WTC11 (cell line): ENCODE measurements at regions of chr9 and their contacts with region 1.

Region 1: GRCh38 chr9:133184962-133185361 is 21.2 kb upstream of the GBGT1 start:
- DNase-seq: no peak
- ATAC-seq: no peak
- H3K4me3 Mint-ChIP-seq: no peak overlapping the region
- H3K27ac Mint-ChIP-seq: no peak overlapping the region
- H3K4me1 Mint-ChIP-seq: no peaks in the 10 kb centered on the region
- H3K27me3 Mint-ChIP-seq: peaks cover 38% of the 10 kb centered on the region
- CTCF ChIP-seq: no peak

Region 2: GRCh38 chr9:133014696-133015095 is 170.3 kb before region 1 on chr9:
- CTCF ChIA-PET with region 1: no interaction called
- POLR2A ChIA-PET with region 1: no interaction called
- DNase-seq: no peak
- ATAC-seq: no peak
- H3K4me3 Mint-ChIP-seq: no peak overlapping the region
- H3K27ac Mint-ChIP-seq: no peak overlapping the region
- H3K4me1 Mint-ChIP-seq: no peaks in the 10 kb centered on the region
- H3K27me3 Mint-ChIP-seq: peaks cover 57% of the 10 kb centered on the region
- CTCF ChIP-seq: no peak

Region 3: GRCh38 chr9:133030317-133031129 is 154.4 kb before region 1 on chr9 and contains the start of gene GTF3C5:
- CTCF ChIA-PET with region 1: interaction called, 11 read pairs
- POLR2A ChIA-PET with region 1: interaction called, 4 read pairs
- DNase-seq: peak; percentile 90
- ATAC-seq: peak; percentile 98
- H3K4me3 Mint-ChIP-seq: peak within 1 kb of the TSS; percentile 99
- H3K27ac Mint-ChIP-seq: peak within 1 kb of the TSS; percentile 99
- H3K4me1 Mint-ChIP-seq: peaks cover 17% of the 10 kb centered on the region
- H3K27me3 Mint-ChIP-seq: peaks cover 12% of the 10 kb centered on the region
- CTCF ChIP-seq: no peak
- total RNA-seq, gene GTF3C5: 86.6 to 104 TPM (median 87.6 TPM) in 3 replicates

Region 4: DNA sequence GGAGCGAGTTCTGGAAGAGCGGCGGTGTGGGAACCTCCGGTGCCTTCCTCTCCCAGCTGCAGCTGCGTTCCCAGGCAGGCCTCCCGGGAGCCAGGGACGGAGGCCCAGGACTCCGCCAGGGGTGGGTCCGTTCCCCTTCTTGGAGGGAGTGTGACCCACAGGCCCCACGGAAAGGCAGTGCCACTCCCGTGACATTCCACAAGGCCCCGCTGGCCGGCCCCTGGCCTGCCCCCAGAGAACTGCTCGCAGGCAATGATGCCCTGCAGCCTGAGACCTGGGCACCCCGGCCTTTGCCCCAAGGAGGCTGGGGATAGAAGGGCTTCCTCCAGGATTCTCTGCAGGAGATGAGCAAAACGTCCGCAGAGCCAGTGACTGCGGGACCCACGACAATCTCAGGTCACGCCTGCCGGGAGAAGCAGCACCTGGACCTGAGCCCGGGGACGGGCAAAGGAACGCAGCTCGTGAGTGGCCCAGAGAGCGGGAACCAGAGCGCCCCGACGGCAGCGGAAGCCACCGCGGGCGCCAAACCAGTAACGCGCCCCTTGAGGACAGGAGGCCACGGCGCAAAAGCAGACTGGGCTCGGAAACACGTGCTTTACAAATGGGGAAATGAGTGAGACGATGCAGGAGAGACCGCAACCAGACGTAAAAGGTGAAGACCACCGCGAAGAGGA is 14.8 kb after region 1 on chr9:
- CTCF ChIA-PET with region 1: interaction called, 16 read pairs
- POLR2A ChIA-PET with region 1: interaction called, 4 read pairs
- DNase-seq: peak; percentile 34
- ATAC-seq: peak; percentile 78
- H3K4me3 Mint-ChIP-seq: no peak overlapping the region
- H3K27ac Mint-ChIP-seq: no peak overlapping the region
- H3K4me1 Mint-ChIP-seq: no peaks in the 10 kb centered on the region; the same call in 1 of the 2 replicates
- H3K27me3 Mint-ChIP-seq: peaks cover 67% of the 10 kb centered on the region
- CTCF ChIP-seq: no peak

Region 5: GRCh38 chr9:133238851-133239532 is 54.0 kb after region 1 on chr9:
- CTCF ChIA-PET with region 1: interaction called, 153 read pairs
- POLR2A ChIA-PET with region 1: interaction called, 6 read pairs
- DNase-seq: peak; percentile 93
- ATAC-seq: peak; percentile 69
- H3K4me3 Mint-ChIP-seq: peak overlapping the region; percentile 71
- H3K27ac Mint-ChIP-seq: peak overlapping the region; percentile 93
- H3K4me1 Mint-ChIP-seq: peaks cover 4% of the 10 kb centered on the region
- H3K27me3 Mint-ChIP-seq: peaks cover 36% of the 10 kb centered on the region
- CTCF ChIP-seq: peak; percentile 93

Region 6: DNA sequence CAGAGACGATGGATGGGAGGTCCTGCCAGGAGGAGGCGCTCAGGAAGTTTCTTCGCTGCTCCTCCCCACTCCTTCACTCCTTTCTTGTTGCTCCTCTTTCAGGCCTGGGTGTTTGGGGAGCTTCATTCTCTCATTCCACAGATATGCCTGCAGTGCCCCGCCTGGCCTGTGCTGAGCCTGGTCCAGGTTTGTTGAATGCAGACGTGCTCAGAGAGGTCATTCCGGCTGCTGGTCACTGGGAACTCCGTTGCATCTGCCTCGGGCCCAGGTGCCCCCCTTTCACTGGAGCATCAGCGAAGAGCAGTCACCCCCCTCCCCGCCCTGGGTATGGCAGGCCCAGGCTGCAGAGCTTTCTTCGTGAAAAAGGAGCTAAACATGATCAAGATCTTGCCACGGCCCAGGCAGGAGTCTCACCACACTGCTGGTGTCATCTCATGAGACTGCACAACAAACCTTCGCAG is 135.5 kb after region 1 on chr9:
- CTCF ChIA-PET with region 1: interaction called, 46 read pairs
- POLR2A ChIA-PET with region 1: no interaction called
- DNase-seq: peak; percentile 35
- ATAC-seq: peak; percentile 93
- H3K4me3 Mint-ChIP-seq: no peak overlapping the region
- H3K27ac Mint-ChIP-seq: no peak overlapping the region
- H3K4me1 Mint-ChIP-seq: no peaks in the 10 kb centered on the region
- H3K27me3 Mint-ChIP-seq: peaks cover 18% of the 10 kb centered on the region
- CTCF ChIP-seq: no peak

Region 7: DNA sequence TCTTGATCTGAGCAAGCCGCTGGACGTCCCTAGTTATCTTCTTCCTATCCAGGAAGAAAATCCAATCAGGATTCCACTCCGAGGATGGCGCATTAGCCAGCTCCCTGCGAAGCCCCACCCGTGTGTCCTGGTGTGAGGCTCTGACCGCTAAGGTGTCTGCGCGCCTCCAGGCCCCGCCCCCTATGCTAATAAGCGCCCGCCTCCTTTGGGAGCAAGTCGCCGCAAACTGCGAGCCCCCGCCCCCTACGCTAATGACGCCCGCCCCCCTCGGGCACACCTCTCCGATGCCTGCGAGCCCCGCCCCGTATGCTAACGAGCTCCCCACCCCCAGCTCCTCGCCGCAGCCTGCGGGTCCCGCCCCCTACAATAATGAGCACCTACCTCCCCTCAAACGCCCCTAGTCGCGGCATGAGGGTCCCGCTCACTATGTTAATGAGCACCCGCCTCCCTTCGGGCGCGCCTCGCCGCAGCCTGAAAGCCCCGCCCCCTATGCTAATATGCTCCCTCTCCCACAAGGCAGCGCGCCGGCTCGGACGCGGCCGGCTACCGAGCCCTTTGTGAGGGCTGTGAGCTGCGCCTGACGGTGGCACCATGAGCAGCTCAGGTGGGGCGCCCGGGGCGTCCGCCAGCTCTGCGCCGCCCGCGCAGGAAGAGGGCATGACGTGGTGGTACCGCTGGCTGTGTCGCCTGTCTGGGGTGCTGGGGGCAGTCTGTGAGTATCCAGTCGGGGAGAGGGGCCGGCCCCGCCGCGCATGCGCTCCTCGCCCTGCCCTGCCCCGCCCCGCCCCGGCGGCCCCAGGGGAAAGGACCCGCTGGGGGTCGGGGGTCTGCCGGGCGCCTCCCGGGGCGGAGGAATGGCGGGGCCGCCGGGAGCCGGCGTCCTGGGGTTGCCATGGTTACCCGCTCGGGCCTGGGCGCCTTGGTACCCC is 274.8 kb after region 1 on chr9 and contains the start of gene CACFD1:
- CTCF ChIA-PET with region 1: interaction called, 10 read pairs
- POLR2A ChIA-PET with region 1: no interaction called
- DNase-seq: peak; percentile 99
- ATAC-seq: peak; percentile 88
- H3K4me3 Mint-ChIP-seq: peak within 1 kb of the TSS; percentile 82
- H3K27ac Mint-ChIP-seq: peak within 1 kb of the TSS; percentile 96
- H3K4me1 Mint-ChIP-seq: peaks cover 31% of the 10 kb centered on the region
- H3K27me3 Mint-ChIP-seq: no peaks in the 10 kb centered on the region
- CTCF ChIP-seq: no peak
- total RNA-seq, gene CACFD1: 22.5 to 38.7 TPM (median 29.5 TPM) in 3 replicates